ENCODE measurements at regions of chr19 and their contacts with region 1.

Region 1: GRCh38 chr19:6021878-6022569 is 44.1 kb upstream of the RANBP3 start:
- DNase-seq: peak; percentile 86

Region 2: GRCh38 chr19:5959666-5960338 is 62.2 kb before region 1 on chr19:
- CTCF ChIA-PET with region 1: no interaction called
- POLR2A ChIA-PET with region 1: no interaction called
- DNase-seq: no peak

Region 3: GRCh38 chr19:5987077-5987818 is 34.8 kb before region 1 on chr19:
- CTCF ChIA-PET with region 1: interaction called, 30 read pairs
- POLR2A ChIA-PET with region 1: interaction called, 10 read pairs
- DNase-seq: peak; percentile 75

Region 4: GRCh38 chr19:6011794-6012193 is 10.2 kb before region 1 on chr19:
- CTCF ChIA-PET with region 1: interaction called, 15 read pairs
- POLR2A ChIA-PET with region 1: interaction called, 3 read pairs
- DNase-seq: no peak

Region 5: GRCh38 chr19:6070720-6071485 is 48.9 kb after region 1 on chr19:
- CTCF ChIA-PET with region 1: no interaction called
- POLR2A ChIA-PET with region 1: no interaction called
- DNase-seq: no peak

Region 6: GRCh38 chr19:6133231-6133630 is 111.2 kb after region 1 on chr19:
- CTCF ChIA-PET with region 1: no interaction called
- POLR2A ChIA-PET with region 1: no interaction called
- DNase-seq: no peak